ENCODE measurements at regions of chr17 and their contacts with region 1.

Region 1: DNA sequence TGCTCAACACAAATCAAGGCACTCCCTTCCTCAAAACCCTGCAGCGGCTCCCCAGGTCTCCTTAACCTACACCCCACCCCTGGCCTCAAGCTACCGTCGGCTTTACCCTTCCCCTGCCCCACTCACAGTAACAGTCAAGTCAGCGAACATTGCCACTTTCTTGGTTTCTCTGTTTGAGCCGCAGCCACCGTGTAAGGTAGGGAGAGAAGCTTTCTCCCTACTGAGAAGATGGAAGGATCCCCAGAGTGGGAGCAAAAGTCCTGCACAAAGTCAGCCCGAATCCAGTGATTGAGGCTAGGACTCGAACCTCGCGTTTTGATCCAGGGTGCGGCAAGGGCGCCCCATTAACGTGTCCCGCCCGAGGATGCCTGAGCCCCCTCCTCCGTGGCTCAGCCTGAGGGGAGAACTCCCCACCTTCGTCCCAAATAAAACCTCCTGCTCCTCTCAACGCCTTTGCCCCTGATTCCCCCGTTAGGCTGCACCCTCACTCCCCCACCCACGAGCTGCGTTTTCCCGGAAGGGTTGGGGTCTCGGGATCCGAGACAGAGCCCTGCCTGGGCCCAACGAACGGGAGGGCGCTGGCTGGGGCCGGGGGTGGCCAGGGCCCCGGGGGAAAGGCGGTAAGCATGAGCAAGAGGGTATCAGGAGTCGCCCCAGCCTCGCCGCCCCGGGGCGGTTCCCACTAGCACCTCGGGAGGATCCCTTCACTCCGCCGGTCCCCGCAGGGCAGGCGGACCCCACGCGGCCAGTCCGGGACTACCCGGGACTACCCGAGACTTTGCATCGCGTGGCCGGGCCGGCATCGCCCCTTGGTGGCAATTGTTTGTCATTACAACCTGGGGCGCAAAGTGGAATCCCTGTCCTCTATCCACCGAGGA is 9.9 kb upstream of the NAGS start:
- DNase-seq: peak; percentile 28
- H3K4me3 ChIP-seq: peak overlapping the region; percentile 45 to 57 (median 55)
- H3K27ac ChIP-seq: no peak overlapping the region
- H3K4me1 ChIP-seq: peaks cover 9% of the 10 kb centered on the region
- H3K27me3 ChIP-seq: peaks cover 3% of the 10 kb centered on the region
- CTCF ChIP-seq: peak; percentile 65 to 85

Region 2: DNA sequence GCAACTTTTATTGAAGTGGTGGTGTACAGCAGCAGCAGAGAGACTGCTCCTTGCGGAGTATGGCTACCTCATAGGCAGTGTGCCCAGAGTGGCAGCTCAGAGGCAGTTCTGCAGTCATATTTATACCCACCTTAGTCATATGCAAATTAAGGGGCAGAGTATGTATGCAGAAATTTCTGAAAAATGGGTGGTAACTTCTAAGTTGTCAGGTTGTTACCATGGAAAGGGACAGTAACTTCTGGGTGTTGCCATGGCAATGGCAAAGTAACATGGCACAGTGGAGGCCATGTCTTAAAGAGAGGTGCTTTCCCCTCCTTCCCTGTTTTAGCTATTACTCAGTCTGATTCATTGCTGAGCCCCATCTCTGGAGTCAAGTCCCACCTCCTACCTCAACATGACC is 386.2 kb before region 1 on chr17:
- CTCF ChIA-PET with region 1: interaction called, 23 read pairs
- dilution Hi-C with region 1: no loop called
- in situ Hi-C with region 1: no loop called
- intact Hi-C with region 1: no loop called
- DNase-seq: peak; percentile 73
- H3K4me3 ChIP-seq: no peak overlapping the region
- H3K27ac ChIP-seq: no peak overlapping the region
- H3K4me1 ChIP-seq: peaks cover 4% of the 10 kb centered on the region
- H3K27me3 ChIP-seq: no peaks in the 10 kb centered on the region
- CTCF ChIP-seq: no peak

Region 3: GRCh38 chr17:43791589-43791988 is 202.9 kb before region 1 on chr17:
- CTCF ChIA-PET with region 1: no interaction called
- dilution Hi-C with region 1: no loop called
- in situ Hi-C with region 1: no loop called
- intact Hi-C with region 1: loop called (anchors 1 kb)
- DNase-seq: peak; percentile 72
- H3K4me3 ChIP-seq: no peak overlapping the region
- H3K27ac ChIP-seq: no peak overlapping the region
- H3K4me1 ChIP-seq: peaks cover 16% of the 10 kb centered on the region
- H3K27me3 ChIP-seq: no peaks in the 10 kb centered on the region
- CTCF ChIP-seq: no peak

Region 4: GRCh38 chr17:43878260-43879175 is 116.0 kb before region 1 on chr17:
- CTCF ChIA-PET with region 1: no interaction called
- dilution Hi-C with region 1: no loop called
- in situ Hi-C with region 1: no loop called
- intact Hi-C with region 1: loop called (anchors 1 kb)
- DNase-seq: peak; percentile 76
- H3K4me3 ChIP-seq: no peak overlapping the region
- H3K27ac ChIP-seq: no peak overlapping the region
- H3K4me1 ChIP-seq: peaks cover 4% of the 10 kb centered on the region
- H3K27me3 ChIP-seq: no peaks in the 10 kb centered on the region
- CTCF ChIP-seq: peak; percentile 93 to 99

Region 5: DNA sequence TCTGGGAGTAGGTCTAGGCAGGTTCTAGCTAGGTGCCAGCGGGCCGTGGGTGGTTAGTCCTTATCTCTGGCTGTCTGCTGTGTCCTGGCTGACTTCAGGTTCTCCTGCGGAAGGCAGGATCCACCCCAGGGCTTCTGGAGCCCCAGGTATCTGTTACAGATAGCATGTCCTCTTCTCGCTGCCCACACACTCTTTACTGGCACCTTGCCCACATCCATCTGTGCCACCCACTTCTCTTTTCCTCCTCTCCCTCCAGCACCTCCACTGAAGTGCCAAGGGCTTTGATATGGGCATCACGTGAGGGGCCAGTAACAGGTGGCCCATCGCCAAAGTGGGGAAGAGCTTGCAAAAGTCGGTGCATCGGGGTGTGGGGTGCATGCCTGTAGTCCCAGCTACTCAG is 82.6 kb before region 1 on chr17:
- CTCF ChIA-PET with region 1: interaction called, 10 read pairs
- dilution Hi-C with region 1: no loop called
- in situ Hi-C with region 1: no loop called
- intact Hi-C with region 1: loop called (anchors 1 kb)
- DNase-seq: no peak
- H3K4me3 ChIP-seq: no peak overlapping the region
- H3K27ac ChIP-seq: no peak overlapping the region
- H3K4me1 ChIP-seq: peaks cover 8% of the 10 kb centered on the region
- H3K27me3 ChIP-seq: peaks cover 17% of the 10 kb centered on the region
- CTCF ChIP-seq: no peak

Region 6: GRCh38 chr17:43927060-43927864 is 67.2 kb before region 1 on chr17:
- CTCF ChIA-PET with region 1: no interaction called
- dilution Hi-C with region 1: loop called (anchors 5 kb)
- in situ Hi-C with region 1: no loop called
- intact Hi-C with region 1: no loop called
- DNase-seq: no peak
- H3K4me3 ChIP-seq: peak overlapping the region in 1 of 3 experiments; percentile 17
- H3K27ac ChIP-seq: no peak overlapping the region
- H3K4me1 ChIP-seq: peaks cover 5% of the 10 kb centered on the region
- H3K27me3 ChIP-seq: peaks cover 14% of the 10 kb centered on the region
- CTCF ChIP-seq: no peak

Region 7: GRCh38 chr17:43952717-43953666 is 41.5 kb before region 1 on chr17:
- CTCF ChIA-PET with region 1: no interaction called
- dilution Hi-C with region 1: loop called (anchors 5 kb)
- in situ Hi-C with region 1: loop called in 1 of 2 experiments (anchors 10 kb)
- intact Hi-C with region 1: no loop called
- DNase-seq: no peak
- H3K4me3 ChIP-seq: no peak overlapping the region
- H3K27ac ChIP-seq: no peak overlapping the region
- H3K4me1 ChIP-seq: peaks cover 5% of the 10 kb centered on the region
- H3K27me3 ChIP-seq: peaks cover 17% of the 10 kb centered on the region
- CTCF ChIP-seq: no peak

Region 8: GRCh38 chr17:44014437-44015172 is 20.1 kb after region 1 on chr17 and contains the start of gene TMEM101:
- CTCF ChIA-PET with region 1: no interaction called
- dilution Hi-C with region 1: no loop called
- in situ Hi-C with region 1: no loop called
- intact Hi-C with region 1: no loop called
- DNase-seq: peak; percentile 83
- H3K4me3 ChIP-seq: peak within 1 kb of the TSS; percentile 89 to 99 (median 91)
- H3K27ac ChIP-seq: peak within 1 kb of the TSS; percentile 80
- H3K4me1 ChIP-seq: peaks cover 4% of the 10 kb centered on the region
- H3K27me3 ChIP-seq: no peaks in the 10 kb centered on the region
- CTCF ChIP-seq: no peak
- total RNA-seq, gene TMEM101: 24.4 to 39.0 TPM

Measured in mammary epithelial cell (primary cell).